ENCODE measurements at regions of chr16 and their contacts with region 1.

Region 1: DNA sequence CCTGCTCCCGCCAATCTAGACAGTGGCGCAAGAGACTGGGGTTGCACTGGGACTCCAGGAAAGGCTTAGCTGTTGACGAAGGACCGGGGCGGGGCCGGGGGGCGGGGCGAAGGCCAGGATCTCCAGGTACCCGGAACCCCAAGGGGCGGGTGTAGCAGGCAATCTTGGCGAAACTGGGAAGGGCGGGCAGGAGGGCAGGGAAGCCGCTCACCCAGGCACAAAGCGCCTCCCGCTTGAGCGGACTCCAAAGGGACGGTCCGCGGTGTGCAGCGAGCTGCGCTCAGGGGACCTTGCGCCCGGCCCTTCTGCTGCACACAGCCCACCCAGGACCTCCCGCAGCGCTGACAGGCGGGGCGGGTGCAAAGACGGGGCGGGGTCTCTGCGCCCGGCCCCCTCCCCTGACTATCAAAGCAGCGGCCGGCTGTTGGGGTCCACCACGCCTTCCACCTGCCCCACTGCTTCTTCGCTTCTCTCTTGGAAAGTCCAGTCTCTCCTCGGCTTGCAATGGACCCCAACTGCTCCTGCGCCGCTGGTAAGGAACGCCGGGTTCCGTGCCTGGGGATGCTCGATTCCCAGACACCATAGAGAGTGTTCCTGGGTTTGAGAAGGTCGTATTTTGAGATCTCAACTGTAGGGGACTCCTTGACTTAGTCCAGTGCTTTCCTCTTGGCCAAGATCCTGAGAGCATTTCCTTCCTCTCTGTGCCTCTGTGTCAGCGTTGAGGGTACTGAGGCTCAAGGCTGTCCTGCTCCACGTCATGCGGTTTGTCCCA is at the start of gene MT1F:
- DNase-seq: peak; percentile 84
- ATAC-seq: peak; percentile 85
- H3K4me3 Mint-ChIP-seq: peak within 1 kb of the TSS; percentile 79
- H3K27ac Mint-ChIP-seq: peak within 1 kb of the TSS; percentile 76
- H3K4me1 Mint-ChIP-seq: peaks cover 16% of the 10 kb centered on the region
- H3K27me3 Mint-ChIP-seq: peaks cover 2% of the 10 kb centered on the region
- total RNA-seq, gene MT1F: 7.0 to 7.1 TPM

Region 2: DNA sequence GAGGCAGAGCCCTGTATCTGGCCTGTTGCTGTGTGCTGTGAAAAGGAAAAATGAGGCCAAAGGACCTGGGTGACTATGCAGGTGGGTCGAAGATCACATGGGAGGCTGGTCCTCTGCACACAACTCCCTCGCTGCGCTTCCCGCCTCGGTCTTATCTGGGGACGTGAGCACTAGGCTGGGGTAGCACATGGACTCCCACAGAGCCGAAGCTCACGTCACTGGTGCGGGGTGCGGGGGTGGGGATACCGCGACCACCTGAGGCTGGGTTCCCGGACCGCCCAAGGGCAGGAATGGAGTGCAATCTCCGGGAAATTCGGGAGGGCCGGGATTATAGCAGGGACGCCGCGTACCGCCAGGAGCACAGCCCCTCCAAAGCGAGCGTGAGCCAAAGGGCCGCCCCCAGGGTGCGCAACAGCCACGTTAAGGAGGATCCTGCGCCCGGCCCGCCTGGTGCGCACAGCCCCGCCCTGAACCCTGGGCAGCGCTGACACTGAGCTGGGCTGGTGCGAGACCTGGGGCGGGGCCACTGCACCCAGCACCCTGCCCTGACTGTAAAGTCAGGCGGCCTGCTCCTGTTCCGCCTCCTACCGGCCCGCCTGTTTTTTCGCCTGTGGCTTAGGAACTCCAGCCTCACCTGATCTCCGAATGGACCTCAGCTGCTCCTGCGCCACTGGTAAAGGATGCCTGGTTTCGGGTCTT is 14.5 kb before region 1 on chr16:
- CTCF ChIA-PET with region 1: interaction called, 8 read pairs
- POLR2A ChIA-PET with region 1: interaction called, 6 read pairs
- intact Hi-C with region 1: loop called (anchors 1 to 2 kb)
- DNase-seq: peak; percentile 90
- ATAC-seq: peak; percentile 100
- H3K4me3 Mint-ChIP-seq: peak overlapping the region; percentile 39
- H3K27ac Mint-ChIP-seq: peak overlapping the region; percentile 39
- H3K4me1 Mint-ChIP-seq: peaks cover 20% of the 10 kb centered on the region
- H3K27me3 Mint-ChIP-seq: peaks cover 43% of the 10 kb centered on the region

Region 3: DNA sequence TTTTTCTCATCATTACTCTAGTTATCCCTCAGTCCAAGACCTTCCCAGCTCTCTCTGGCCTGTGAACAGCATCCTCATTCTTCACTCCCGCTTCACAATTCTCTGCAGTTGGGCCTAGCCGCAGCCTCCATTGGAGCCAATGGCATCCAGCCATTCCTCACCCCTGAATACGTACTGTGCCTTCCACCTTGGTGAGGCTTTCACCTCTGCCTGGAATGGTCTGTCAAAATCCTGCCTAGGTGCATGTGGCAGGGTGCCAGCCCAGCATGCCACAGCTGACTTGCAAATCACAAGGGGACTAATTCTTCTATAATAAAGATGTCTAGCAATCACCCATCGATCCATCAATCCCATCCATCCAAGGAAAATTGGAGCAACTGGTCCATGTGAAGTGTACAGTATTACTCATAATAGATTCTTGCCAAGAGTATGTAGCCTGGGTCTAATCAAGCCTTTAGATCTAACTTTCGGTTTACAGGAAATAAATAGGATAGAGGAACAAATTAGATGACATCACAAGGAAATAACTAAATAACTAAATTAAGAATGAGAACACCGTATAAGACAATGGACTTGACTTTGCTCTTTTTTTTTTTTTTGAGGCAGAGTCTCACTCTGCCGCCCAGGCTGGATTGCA is 709.5 kb after region 1 on chr16:
- CTCF ChIA-PET with region 1: no interaction called
- POLR2A ChIA-PET with region 1: no interaction called
- intact Hi-C with region 1: no loop called
- DNase-seq: no peak
- ATAC-seq: no peak
- H3K4me3 Mint-ChIP-seq: no peak overlapping the region
- H3K27ac Mint-ChIP-seq: no peak overlapping the region
- H3K4me1 Mint-ChIP-seq: no peaks in the 10 kb centered on the region
- H3K27me3 Mint-ChIP-seq: peaks cover 6% of the 10 kb centered on the region